Mammary epithelial cell (primary cell): ENCODE measurements at regions of chr1 and their contacts with region 1.

Region 1: GRCh38 chr1:244599937-244600350 is 53.0 kb upstream of the DESI2 start:
- DNase-seq: peak; percentile 93
- H3K4me3 ChIP-seq: peak overlapping the region; percentile 20 to 46 (median 42)
- H3K27ac ChIP-seq: peak overlapping the region; percentile 78
- H3K4me1 ChIP-seq: peaks cover 4% of the 10 kb centered on the region
- H3K27me3 ChIP-seq: no peaks in the 10 kb centered on the region
- CTCF ChIP-seq: no peak

Region 2: DNA sequence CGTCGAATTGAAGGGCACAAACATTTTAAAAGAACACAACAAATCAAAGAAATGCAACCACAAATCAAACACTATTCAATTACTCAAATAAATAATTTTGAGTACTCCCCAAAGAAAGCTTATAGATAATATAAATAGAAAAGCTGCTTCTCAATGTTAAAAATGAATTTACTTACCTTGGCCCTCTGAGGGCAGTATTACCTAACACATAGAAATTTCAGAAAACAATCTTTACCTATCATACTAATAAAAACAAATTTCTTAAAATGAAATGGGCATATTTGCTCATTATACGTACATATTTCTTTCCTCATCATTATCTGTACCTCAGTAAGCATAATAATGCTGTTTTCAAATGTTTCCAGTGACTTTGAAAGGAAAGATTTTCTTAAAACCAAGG is 891.7 kb before region 1 on chr1:
- CTCF ChIA-PET with region 1: no interaction called
- dilution Hi-C with region 1: no loop called
- in situ Hi-C with region 1: no loop called
- intact Hi-C with region 1: loop called (anchors 5 kb)
- DNase-seq: no peak
- H3K4me3 ChIP-seq: no peak overlapping the region
- H3K27ac ChIP-seq: no peak overlapping the region
- H3K4me1 ChIP-seq: no peaks in the 10 kb centered on the region
- H3K27me3 ChIP-seq: no peaks in the 10 kb centered on the region
- CTCF ChIP-seq: peak; percentile 17 to 39

Region 3: DNA sequence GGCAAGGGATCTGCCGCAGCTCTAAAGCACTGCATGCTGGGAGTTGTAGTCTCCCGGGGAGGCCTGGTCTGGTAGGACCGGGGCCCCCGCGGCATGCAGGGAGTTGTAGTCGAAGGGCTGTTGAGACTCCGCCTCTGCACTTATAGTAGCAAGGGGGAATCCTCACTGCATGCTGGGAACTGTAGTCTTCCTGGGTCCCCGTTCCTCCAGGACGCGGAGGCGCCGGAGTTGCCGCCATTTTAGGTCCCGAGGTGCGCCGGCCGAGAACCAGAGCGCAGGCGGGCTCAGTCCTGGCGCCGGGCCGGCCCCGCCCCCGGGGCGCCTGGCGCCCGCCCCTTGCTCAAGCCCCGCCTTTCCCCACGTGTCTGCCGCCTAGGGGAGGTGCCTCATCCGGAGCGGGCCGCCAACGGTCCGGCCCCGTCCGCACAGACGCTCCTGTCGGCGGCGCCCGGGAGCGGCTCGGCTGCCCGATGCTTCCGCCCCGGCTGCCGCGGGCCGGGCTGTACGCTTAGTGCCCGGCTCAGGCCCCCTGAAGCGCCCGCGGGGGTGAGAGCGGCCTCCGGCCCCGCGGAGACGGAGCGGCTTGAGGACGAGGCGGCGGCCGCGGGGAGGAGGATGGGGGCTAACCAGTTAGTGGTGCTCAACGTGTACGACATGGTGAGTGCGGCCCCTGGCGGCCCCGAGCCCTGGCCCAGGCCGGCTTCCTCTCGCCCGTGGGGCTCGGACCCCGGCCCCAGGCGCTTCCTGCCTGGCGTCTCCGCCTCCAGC is 52.9 kb after region 1 on chr1 and contains the start of gene DESI2:
- CTCF ChIA-PET with region 1: no interaction called
- dilution Hi-C with region 1: no loop called
- in situ Hi-C with region 1: no loop called
- intact Hi-C with region 1: loop called (anchors 1 kb)
- DNase-seq: peak; percentile 99
- H3K4me3 ChIP-seq: peak within 1 kb of the TSS; percentile 79 to 95 (median 89)
- H3K27ac ChIP-seq: peak within 1 kb of the TSS; percentile 83
- H3K4me1 ChIP-seq: peaks cover 17% of the 10 kb centered on the region
- H3K27me3 ChIP-seq: no peaks in the 10 kb centered on the region
- CTCF ChIP-seq: peak; percentile 9 to 52
- total RNA-seq, gene DESI2: 38.5 to 63.3 TPM

Region 4: DNA sequence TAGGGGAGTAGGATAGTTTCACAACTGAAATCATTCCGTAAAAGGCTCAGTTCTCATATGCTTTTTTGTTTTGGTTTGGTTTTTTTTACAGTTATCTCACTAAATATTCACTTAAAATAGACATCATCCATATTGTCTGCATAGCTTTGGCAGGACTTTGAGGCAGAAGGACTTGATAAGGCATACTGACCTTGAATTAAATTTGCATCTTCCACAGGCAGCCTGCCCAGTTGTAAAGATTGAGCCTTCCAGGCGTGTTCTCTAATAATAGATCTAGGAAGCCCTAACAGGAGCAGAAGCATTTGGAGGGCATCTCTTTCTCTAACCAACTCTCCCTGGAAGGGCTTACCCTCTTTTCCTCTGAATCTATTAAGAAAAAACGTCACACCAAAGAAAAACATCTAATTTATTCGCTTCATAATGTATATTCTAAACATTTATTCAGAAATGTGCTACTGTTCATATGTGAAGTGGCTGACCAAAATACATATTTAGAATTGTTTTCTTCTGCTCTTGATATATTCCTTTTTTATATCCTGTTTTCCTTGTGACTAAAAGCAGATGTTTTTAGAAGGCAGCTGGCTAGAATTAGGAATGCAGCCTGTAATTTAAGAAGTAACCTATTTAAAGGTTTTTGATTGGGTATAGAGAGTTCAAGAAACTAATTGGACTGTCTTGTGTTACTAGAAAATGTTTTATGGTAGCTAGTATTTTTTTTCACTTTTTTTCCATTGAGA is 73.2 kb after region 1 on chr1:
- CTCF ChIA-PET with region 1: no interaction called
- dilution Hi-C with region 1: loop called (anchors 5 kb)
- in situ Hi-C with region 1: no loop called
- intact Hi-C with region 1: no loop called
- DNase-seq: no peak
- H3K4me3 ChIP-seq: no peak overlapping the region
- H3K27ac ChIP-seq: no peak overlapping the region
- H3K4me1 ChIP-seq: no peaks in the 10 kb centered on the region
- H3K27me3 ChIP-seq: no peaks in the 10 kb centered on the region
- CTCF ChIP-seq: no peak

Region 5: DNA sequence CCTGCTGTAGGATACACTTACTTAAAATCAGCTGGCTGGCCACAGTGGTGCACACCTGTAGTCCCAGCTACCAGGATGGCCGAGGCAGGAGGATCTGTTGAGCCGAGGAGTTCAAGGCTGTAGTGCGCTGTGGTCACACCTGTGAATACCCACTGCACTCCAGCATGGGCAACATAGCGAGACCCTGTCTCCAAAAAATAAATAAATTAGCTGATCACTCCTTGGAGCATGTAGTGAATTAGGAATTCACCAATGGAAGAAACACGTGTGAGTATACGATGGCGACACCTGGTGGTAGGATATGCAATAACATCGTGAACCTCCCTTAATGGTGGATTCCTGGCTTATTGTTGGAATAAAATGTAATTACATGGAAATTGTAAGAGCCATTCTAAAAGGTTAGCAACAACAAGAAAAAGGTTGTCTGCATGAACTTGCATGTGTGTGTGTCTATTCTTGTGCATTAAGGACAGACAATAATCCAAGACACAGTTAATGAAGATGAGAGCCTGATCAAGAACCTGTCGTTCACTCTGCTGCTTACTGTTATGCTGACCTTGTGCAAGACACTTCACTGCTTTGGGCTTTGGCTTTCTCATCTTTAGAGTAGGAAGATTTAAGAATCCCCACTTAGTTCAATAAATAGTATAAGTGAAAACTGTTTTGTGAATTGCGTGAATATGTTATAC is 196.9 kb after region 1 on chr1:
- CTCF ChIA-PET with region 1: no interaction called
- dilution Hi-C with region 1: no loop called
- in situ Hi-C with region 1: loop called (anchors 5 kb)
- intact Hi-C with region 1: loop called (anchors 1 kb)
- DNase-seq: peak; percentile 44
- H3K4me3 ChIP-seq: no peak overlapping the region
- H3K27ac ChIP-seq: no peak overlapping the region
- H3K4me1 ChIP-seq: no peaks in the 10 kb centered on the region
- H3K27me3 ChIP-seq: no peaks in the 10 kb centered on the region
- CTCF ChIP-seq: peak; percentile 74 to 91

Region 6: DNA sequence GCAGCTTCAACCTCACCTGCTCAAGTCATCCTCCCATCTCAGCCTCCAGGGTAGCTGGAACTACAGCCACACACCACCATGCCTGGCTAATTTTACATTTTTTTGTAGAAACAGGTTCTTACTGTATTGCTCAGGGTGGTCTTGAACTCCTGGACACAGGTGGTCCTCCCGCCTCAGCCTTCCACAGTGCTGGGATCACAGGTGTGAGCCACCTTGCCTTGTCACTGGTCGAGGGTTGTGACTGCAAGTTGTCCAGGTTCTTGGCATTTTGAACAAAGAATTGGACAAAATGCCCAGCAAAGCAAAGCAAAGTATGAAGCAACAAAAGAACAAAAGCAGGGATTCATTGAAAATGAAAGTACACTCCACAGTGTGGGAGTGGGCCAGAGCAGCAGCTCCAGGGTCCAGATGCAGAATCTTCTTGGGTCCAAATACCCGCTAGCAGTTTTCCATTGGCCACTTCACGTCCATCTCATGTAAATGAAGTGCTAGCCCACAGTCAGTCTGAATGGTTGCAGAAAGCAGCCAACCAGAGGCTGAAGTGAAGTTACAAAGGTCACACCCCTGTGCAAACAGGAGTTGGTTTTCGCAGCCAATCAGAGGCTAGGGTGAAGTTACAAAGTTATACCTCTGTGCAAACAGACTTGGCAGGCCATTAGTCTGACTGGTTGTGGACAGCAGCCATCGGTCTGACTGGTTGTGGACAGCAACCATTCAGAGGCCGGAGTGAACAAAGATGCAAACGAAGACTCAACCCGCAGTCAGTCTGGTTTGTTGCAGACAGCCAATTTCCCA is 445.3 kb after region 1 on chr1:
- CTCF ChIA-PET with region 1: no interaction called
- dilution Hi-C with region 1: no loop called
- in situ Hi-C with region 1: loop called (anchors 25 kb)
- intact Hi-C with region 1: loop called (anchors 1 kb)
- DNase-seq: peak; percentile 70
- H3K4me3 ChIP-seq: peak overlapping the region in 2 of 3 experiments; percentile 0 to 13
- H3K27ac ChIP-seq: no peak overlapping the region
- H3K4me1 ChIP-seq: peaks cover 6% of the 10 kb centered on the region
- H3K27me3 ChIP-seq: no peaks in the 10 kb centered on the region
- CTCF ChIP-seq: no peak